ENCODE measurements at regions of chr20 and their contacts with region 1.

Region 1: GRCh38 chr20:2752567-2753460 is 47.6 kb downstream of the CPXM1 start:
- DNase-seq: no peak
- H3K4me3 ChIP-seq: peak overlapping the region; percentile 49
- H3K27me3 ChIP-seq: peaks cover 32% of the 10 kb centered on the region
- CTCF ChIP-seq: peak; percentile 95

Region 2: DNA sequence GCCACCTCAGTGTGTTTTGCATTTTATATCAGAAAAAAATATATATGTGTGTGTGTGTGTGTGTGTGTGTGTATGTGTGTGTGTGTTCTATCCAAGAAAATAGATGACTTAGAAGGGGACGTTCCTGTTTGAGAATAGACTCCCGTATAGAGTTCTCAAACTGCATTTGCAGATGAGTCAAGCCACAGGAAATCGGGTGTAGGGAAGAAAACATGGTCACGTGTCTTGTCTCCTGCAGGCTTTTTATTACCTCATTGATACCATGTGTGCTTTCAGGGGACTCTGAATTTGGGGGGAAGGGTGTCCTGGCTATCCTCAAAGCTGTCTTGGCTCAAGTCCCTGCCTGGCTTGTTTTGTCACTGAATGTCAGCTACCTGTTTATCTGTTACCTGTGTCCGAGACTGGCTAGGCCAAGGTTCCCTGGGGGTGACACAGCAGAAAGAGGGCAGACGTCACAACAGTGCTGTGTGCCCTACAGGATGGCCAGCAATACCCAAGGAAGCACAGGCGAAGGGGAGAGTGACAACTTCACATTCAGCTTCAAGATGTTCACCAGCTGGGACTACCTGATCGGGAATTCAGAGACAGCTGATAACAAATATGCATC is 156.0 kb before region 1 on chr20:
- CTCF ChIA-PET with region 1: no interaction called
- POLR2A ChIA-PET with region 1: no interaction called
- DNase-seq: no peak
- H3K4me3 ChIP-seq: no peak overlapping the region
- H3K27me3 ChIP-seq: peaks cover 4% of the 10 kb centered on the region
- CTCF ChIP-seq: no peak

Region 3: DNA sequence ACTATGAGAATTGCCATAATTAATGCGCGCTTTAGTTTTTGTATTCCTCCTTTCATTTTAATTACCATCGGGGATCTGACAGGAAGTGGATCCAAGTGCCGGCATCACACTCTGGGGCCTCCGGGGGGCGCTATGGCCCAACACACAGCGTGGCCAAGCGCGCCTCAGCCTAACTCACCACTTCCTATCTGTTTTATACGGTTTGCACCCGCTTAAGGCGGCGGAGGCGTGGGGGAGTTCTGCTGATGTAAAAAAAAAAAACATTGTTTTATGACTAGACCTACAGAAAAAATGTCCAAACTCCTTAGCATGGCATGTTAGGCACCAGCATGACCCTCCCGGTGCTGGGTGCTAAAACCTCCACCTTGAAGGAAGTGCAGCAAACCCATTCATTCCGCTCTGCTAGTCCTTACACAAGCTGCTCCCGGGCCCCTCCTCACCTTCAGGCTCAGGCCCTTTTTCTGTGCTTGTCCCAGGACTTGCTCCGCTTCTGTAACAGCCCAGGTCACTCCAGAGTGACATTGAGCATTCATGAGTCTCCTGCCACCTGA is 64.7 kb before region 1 on chr20:
- CTCF ChIA-PET with region 1: interaction called, 11 read pairs
- POLR2A ChIA-PET with region 1: no interaction called
- DNase-seq: no peak
- H3K4me3 ChIP-seq: no peak overlapping the region
- H3K27me3 ChIP-seq: peaks cover 18% of the 10 kb centered on the region
- CTCF ChIP-seq: peak; percentile 52

Region 4: DNA sequence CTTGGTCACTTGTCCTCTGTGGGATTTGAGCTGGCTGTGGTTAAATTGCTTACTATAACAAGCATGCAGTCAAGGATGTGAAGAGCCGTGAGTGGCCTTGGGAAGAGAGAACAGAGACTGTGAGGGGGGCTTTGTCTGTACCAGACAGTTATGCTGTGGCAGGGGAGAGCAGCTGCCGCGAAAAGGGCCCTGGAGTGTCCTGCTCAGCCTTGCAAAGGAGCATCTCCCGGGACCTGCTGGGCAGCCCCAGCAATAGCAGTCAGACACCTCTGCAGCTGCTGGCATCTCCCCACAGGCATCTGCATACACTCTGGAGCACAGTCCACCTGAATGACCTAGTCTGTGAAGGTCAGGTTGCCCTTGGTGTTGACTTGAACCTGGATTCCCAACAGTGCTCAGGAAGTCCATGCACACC is 53.9 kb before region 1 on chr20:
- CTCF ChIA-PET with region 1: no interaction called
- POLR2A ChIA-PET with region 1: no interaction called
- DNase-seq: no peak
- H3K4me3 ChIP-seq: no peak overlapping the region
- H3K27me3 ChIP-seq: peaks cover 26% of the 10 kb centered on the region
- CTCF ChIP-seq: no peak

Region 5: DNA sequence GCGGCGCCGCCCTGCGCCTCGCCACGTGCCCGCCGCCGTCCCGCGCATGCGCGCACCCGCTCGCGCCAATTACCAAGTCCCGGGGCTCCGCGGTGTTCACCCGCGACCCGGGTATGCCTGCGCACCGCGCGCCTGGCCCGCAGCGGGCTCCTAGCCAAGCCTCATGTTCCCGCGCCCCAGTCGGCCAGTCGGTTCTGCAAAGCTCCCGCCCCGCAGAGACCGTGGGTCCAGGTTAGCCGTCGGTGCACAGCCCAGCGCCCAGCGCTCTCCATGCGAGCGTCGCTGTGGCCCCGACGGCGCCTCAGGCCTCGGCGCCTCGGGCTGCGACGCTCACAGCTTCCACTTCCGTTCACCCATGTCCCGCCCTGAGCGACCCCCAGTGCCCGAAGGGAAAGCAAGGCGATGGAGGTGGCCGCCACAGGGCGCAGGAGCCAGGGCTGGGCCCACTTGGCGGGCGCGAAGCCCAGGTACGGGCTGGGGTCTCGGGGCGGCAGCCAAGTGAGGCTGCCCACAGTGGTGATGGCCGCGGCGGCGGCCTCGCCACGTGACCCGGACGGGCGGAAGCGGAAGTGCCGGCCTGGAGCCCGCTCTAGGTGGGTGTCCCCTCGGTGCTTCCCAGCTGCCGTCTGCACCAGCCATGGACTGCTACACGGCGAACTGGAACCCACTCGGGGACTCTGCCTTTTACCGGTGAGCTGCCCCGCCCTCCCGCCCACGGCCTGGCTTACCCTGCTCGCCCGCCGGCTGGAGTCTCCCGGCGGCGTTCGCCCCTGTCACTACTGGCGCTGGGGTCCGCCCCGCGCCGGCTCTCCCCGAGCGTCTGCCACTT is 87.5 kb after region 1 on chr20 and contains the starts of genes PCED1A and VPS16:
- CTCF ChIA-PET with region 1: interaction called, 26 read pairs
- POLR2A ChIA-PET with region 1: no interaction called
- DNase-seq: peak; percentile 24
- H3K4me3 ChIP-seq: peak within 1 kb of the TSS; percentile 89
- H3K27me3 ChIP-seq: no peaks in the 10 kb centered on the region
- CTCF ChIP-seq: no peak
- polyA plus RNA-seq, gene PCED1A: 12.7 and 23.5 TPM in 2 replicates
- polyA plus RNA-seq, gene VPS16: 33.5 and 46.8 TPM in 2 replicates

Region 6: DNA sequence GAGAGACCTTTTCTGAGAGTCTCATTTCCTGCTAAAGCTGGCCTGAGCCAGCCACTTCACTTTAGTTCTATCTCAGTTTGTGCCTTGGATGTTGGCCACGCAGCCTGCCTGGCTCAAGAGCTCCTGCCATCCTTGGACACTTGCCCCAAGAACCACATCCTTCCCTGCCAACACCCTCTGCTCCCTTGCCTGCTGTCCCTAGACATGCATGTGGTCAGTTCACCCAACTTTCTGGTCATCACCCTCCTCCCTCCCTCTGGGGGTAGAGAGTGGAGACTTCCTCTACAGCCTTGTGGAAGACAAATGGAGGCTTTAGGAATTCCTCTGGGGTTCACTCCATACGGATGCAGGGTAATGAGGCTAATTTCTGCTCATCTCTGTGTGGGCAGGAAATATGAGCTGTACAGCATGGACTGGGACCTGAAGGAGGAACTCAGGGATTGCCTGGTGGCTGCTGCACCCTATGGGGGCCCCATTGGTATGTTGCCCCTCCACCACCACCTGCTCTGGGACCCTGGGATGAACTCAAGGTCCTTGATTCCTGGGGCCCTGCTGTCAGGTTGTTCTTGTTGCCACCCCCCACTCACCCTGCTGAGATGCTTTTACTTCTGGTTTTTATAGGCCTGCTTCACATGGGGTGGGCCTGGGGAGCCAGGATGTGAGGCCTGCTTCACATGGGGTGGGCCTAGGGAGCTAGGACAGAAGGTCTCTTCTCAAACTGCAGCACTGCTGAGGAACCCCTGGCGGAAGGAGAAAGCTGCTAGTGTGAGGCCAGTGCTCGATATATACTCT is 106.7 kb after region 1 on chr20:
- CTCF ChIA-PET with region 1: interaction called, 166 read pairs
- POLR2A ChIA-PET with region 1: no interaction called
- DNase-seq: no peak
- H3K4me3 ChIP-seq: no peak overlapping the region
- H3K27me3 ChIP-seq: no peaks in the 10 kb centered on the region
- CTCF ChIP-seq: no peak

Region 7: DNA sequence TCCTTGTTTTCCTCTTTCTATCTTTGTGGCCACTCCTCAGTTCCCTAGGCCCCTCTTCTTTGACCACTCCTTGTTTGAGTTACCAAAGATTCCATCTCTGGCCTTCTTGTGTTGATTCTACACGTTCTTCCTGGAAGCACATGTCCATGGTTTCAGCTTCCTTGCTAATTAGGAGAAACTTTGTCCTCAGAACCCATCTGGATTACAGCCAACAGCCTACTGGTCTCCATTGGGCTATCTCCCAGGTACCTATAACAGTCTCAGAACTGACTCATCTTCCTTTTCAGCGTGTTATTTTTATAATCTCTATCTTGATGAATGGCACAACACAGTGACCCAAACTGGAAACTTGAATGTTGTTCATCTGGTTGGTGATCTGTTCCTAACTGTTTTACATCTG is 137.9 kb after region 1 on chr20:
- CTCF ChIA-PET with region 1: no interaction called
- POLR2A ChIA-PET with region 1: no interaction called
- DNase-seq: no peak
- H3K4me3 ChIP-seq: no peak overlapping the region
- H3K27me3 ChIP-seq: no peaks in the 10 kb centered on the region
- CTCF ChIP-seq: no peak

Region 8: GRCh38 chr20:3000852-3001523 is 248.2 kb after region 1 on chr20:
- CTCF ChIA-PET with region 1: interaction called, 20 read pairs
- POLR2A ChIA-PET with region 1: no interaction called
- DNase-seq: no peak
- H3K4me3 ChIP-seq: no peak overlapping the region
- H3K27me3 ChIP-seq: no peaks in the 10 kb centered on the region
- CTCF ChIP-seq: peak; percentile 53